Sigmoid colon (tissue), 7 donors: ENCODE measurements at regions of chr13 and their contacts with region 1.

Region 1: DNA sequence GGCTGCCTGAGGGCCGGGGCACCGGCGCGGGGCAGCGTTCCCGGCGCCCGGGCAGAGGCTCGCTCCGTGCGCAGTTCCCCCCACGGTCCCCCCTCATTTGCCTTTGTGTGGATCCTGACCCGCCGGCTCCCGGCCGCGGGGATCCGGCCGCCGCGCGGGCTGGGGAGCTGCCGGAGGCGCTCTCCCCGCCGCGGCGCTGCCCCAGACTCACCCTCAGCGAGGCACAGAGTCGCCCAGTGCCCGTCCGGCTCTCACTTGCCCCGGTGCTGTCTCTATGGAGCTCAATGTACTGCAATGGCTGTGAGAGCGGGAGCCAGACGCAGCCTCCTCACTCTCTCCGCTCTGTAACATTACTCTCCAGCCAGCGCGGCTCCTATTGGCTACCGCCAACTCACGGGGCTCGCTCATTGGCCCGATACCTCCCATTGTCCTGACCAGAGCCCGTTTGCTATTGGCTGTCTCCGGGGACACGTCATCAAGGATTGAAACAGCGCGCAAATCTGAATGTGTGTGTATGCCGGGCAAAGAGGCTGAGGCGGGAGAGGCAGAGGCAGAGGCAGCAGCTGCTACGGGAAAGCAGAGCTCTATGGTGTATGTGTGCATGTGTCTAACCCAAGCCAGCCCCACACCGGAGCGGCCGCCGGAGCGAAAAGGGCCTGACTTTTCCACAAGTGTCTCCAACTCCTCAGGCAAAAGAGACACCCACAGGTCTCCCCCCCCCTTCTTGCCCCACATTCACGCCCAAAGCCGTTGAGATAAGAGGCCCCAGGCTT is at the start of gene HMGB1:
- DNase-seq: peak; percentile 99
- H3K4me3 ChIP-seq: peak within 1 kb of the TSS; percentile 51 to 96 (median 90)
- H3K27ac ChIP-seq: peak within 1 kb of the TSS; percentile 99 to 100 (median 100)
- H3K4me1 ChIP-seq: peaks cover 2 to 30% (median 24%) of the 10 kb centered on the region in 4 donors
- H3K27me3 ChIP-seq: no peaks in the 10 kb centered on the region
- CTCF ChIP-seq: no peak
- EP300 ChIP-seq: no peak
- POLR2A ChIP-seq: peak; percentile 98
- total RNA-seq, gene HMGB1: 212 to 492 (median 270) TPM

Region 2: GRCh38 chr13:29850224-29850898 is 615.4 kb before region 1 on chr13 and contains the start of gene UBL3:
- intact Hi-C with region 1: loop called (anchors 10 kb)
- DNase-seq: peak; percentile 99
- H3K4me3 ChIP-seq: peak within 1 kb of the TSS; percentile 84 to 92 (median 88)
- H3K27ac ChIP-seq: peak within 1 kb of the TSS; percentile 97 to 99 (median 98)
- H3K4me1 ChIP-seq: peaks cover 0 to 22% (median 17%) of the 10 kb centered on the region in 4 donors
- H3K27me3 ChIP-seq: no peaks in the 10 kb centered on the region
- CTCF ChIP-seq: no peak
- EP300 ChIP-seq: peak in 1 of 4 donors; percentile 36
- POLR2A ChIP-seq: peak; percentile 71 to 80
- total RNA-seq, gene UBL3: 35.6 to 44.6 (median 40.6) TPM

Region 3: DNA sequence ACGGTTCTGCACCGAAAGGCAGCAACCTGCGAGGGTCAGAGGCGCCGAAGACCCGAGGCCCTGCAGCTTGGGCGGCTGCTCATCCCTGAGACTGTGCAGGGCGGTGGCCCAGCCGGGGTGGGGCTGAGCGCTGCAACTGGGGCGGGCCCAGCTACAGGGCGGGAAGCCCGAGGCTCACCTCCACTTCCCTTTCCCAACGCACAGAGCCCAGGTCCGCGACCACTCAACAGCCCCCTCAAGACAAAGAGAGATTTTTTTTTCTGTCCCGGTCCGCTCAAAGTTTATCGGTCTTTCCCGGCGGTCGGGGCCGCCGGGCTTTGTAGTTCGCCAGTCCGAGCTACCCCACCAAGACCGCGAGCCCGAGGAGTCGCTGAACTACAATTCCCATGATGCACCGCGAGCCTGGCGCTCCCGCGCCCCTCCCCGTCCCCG is 159.0 kb before region 1 on chr13:
- intact Hi-C with region 1: loop called (anchors 2 kb)
- DNase-seq: peak; percentile 97
- H3K4me3 ChIP-seq: peak overlapping the region; percentile 60 to 87 (median 82)
- H3K27ac ChIP-seq: peak overlapping the region; percentile 89 to 95 (median 94)
- H3K4me1 ChIP-seq: peaks cover 0 to 57% (median 38%) of the 10 kb centered on the region in 4 donors
- H3K27me3 ChIP-seq: no peaks in the 10 kb centered on the region
- CTCF ChIP-seq: no peak
- EP300 ChIP-seq: no peak
- POLR2A ChIP-seq: no peak

Region 4: GRCh38 chr13:30422054-30422839 is 43.5 kb before region 1 on chr13 and contains the start of gene UBE2L5:
- intact Hi-C with region 1: loop called (anchors 1 kb)
- DNase-seq: peak; percentile 94
- H3K4me3 ChIP-seq: peak within 1 kb of the TSS; percentile 49 to 63 (median 60)
- H3K27ac ChIP-seq: peak within 1 kb of the TSS; percentile 89 to 96 (median 90)
- H3K4me1 ChIP-seq: peaks cover 0 to 47% (median 36%) of the 10 kb centered on the region in 4 donors
- H3K27me3 ChIP-seq: no peaks in the 10 kb centered on the region
- CTCF ChIP-seq: no peak
- EP300 ChIP-seq: no peak
- POLR2A ChIP-seq: peak; percentile 3 to 68
- total RNA-seq, gene UBE2L5: 0.95 to 1.6 TPM in 2 of 4 donors, not detected in the others

Region 5: DNA sequence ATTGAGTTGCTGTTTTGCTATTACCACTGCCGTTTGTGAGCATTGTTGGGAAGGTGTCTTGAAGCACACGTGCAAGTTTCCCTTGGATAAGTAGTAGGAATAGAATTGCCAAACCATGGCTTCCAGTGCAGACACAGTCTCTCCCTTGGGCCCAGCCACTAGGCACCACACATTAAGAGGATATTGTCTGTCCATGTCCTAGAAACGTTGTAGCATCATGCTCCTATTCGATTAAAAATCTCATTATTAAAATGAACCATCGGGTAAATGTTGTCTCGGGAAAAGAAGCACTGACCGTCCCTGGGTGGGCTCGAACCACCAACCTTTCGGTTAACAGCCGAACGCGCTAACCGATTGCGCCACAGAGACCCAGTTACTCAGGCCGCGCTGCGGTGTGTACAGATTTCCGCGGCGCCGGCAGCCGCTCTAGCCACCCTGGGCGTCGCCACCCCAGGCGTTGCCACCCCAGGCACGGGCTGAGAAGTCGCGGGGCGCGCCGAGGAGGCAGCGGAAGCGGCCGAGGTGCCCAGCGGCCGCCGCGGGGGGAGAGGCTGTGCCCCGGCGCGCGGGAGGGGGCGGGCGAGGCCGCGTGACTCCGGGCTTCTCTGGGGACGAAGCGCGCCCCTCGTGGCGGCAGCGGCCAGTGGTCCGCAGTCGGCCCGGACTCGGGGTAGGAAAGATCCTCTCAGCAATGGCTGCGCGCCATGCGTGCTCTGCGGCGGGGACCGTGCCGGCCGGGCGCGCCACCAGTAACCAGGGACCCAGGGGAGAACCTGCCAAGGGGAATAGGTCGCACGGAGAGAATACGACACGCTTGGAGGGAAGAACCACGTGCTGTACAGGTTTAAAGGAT is 208.1 kb after region 1 on chr13:
- intact Hi-C with region 1: loop called (anchors 5 kb)
- DNase-seq: peak; percentile 91
- H3K4me3 ChIP-seq: peak overlapping the region; percentile 18 to 61 (median 48)
- H3K27ac ChIP-seq: peak overlapping the region; percentile 74 to 83 (median 78)
- H3K4me1 ChIP-seq: peaks cover 0 to 11% (median 3%) of the 10 kb centered on the region in 4 donors
- H3K27me3 ChIP-seq: no peaks in the 10 kb centered on the region
- CTCF ChIP-seq: peak in 3 of 4 experiments; percentile 11 to 79 (median 49)
- EP300 ChIP-seq: no peak
- POLR2A ChIP-seq: no peak

Region 6: DNA sequence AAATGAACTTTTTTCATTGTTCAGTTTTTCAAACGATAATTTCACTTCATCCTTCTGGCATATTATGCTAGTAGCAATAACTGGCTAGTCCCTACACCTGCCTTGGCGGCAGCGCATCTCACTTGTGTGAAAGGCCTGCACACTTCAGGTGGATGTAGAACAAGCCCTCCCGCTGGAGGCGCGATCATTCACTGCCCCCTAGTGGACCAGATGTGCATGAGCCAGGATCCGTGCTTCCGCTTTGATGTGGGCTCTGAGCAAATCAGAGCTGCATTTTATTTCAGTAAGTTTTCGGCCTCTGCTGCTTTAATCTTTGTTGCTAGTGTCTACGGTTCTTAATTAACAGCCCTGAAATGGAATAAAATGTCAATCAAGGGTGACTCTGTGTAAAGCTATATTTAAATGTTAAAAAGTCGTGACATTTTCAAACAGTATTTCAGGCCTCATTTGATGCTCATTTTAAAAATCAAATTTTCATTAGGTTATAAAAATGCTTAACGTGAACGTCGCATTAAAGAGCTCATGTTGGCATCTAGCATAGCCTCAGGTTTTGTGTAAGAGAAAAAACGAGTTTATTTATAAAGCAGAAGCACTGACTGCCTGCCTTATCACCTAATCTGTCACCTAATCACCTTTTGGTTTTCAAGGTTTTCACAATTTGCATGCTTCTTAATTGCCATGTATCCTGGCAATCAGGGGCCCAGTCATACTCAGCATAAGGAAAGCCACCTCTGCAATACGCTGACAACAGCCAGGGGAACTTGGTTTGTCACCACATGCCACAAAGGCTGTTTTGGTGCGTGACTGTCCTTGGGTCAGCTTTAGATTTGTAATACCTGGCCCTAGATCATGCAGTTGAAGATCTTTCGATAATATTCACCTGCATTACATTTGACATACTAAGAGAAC is 578.9 kb after region 1 on chr13:
- intact Hi-C with region 1: loop called (anchors 10 kb)
- DNase-seq: peak; percentile 89
- H3K4me3 ChIP-seq: no peak overlapping the region
- H3K27ac ChIP-seq: no peak overlapping the region
- H3K4me1 ChIP-seq: peaks cover 0 to 28% (median 21%) of the 10 kb centered on the region in 4 donors
- H3K27me3 ChIP-seq: no peaks in the 10 kb centered on the region
- CTCF ChIP-seq: peak; percentile 50 to 95 (median 88)
- EP300 ChIP-seq: no peak
- POLR2A ChIP-seq: no peak